AG04449 (cell line): ENCODE measurements at regions of chr3 and their contacts with region 1.

Region 1: GRCh38 chr3:133040696-133041523 is 2.7 kb downstream of the TMEM108 start:
- DNase-seq: peak; percentile 12
- H3K4me3 ChIP-seq: no peak overlapping the region
- CTCF ChIP-seq: peak; percentile 85

Region 2: DNA sequence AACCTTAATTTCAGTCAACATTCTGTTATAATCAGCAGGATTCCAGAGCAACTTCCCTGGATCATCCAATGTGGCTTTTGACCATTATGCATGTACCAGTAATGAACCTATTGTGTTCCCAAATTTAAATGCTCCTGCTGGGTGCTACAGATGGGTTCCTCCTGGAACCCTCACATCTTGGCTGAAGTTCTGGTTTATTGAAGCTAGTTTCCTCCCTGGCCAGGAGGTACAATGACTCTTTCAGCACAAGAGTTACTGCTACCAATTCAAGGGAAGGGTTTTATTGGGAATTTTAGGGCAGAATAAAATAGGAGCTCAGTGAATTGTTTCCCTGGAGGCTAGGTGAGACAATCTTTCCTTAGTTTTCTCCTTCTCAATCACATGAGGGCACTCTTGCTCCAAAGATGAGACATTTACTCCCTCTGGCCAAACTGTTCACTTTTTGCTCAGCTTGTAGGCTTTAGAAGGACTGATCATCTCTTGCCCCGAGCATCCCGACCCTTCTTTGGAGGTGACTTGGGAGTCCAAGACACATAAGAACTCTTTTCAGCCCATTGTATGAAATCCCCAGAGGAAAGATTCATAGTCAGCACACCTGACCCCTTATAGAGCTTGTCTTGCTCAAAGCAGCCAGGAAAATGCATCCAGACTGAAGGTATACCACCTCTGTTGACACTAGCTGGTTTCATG is 309.9 kb before region 1 on chr3:
- CTCF ChIA-PET with region 1: interaction called, 45 read pairs
- POLR2A ChIA-PET with region 1: no interaction called
- DNase-seq: no peak
- H3K4me3 ChIP-seq: no peak overlapping the region
- CTCF ChIP-seq: peak; percentile 27

Region 3: DNA sequence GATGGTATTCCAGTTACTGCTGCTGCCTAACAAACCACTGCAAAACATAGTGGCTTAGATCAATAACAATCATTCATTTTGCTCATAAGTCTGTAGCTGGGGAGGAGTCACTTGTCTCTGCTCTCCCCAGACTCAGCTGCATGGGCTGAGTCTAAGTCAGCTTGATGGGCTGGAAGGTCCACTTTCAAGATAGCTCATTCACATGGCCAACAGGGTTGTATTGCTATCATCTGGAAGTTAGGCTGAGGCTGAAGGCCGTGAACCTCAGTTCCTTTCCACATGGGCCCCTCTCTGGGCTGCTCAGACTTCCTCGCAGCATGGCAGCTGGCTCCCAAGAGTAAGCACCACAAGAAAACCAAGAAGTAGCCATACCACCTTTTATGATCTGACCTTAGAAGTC is 330.3 kb after region 1 on chr3:
- CTCF ChIA-PET with region 1: interaction called, 297 read pairs
- POLR2A ChIA-PET with region 1: no interaction called
- DNase-seq: no peak
- H3K4me3 ChIP-seq: no peak overlapping the region
- CTCF ChIP-seq: no peak

Region 4: DNA sequence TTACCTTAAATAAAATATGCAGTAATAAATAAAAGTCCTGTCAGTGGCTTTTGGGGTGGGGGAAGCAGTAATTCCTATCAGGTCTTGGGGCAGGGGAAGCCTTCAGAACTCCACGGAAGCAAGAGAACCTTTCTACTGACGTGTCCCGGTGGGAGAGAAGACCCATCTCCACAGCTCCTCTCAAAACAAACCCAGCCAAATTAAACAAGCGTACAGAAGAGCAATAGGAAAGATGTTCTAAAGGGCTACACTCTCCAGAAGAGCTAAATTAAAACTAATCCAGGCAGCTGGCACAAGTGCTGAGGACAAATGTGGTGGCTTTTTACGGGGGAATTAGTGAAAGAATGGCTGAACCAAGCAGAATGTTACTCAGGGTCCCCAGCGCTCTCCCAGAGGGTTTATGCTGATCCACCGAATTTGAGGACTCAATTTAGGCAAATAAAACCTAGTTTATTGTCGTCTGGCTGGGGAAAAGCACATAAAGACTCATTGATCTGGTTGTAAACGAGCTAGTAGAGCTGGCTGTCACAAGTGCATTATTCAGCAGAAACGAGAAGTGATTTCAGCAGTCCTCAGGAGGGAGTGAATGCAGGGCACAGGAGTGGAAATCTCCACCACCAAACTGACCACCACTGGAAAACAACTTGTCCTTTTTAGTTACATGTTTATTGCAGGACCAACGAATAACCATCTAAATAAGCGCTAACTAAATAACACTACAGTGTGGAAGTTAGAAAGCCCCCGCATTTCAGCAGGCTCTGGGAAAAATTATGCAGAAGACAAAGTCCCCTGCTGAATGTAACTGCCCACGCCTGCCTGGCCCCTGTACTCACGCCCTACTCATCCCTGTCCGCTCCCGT is 372.5 kb after region 1 on chr3:
- CTCF ChIA-PET with region 1: interaction called, 10 read pairs
- POLR2A ChIA-PET with region 1: no interaction called
- DNase-seq: no peak
- H3K4me3 ChIP-seq: peak overlapping the region; percentile 19; the same call in 1 of the 2 replicates
- CTCF ChIP-seq: no peak